Right cardiac atrium (tissue), 5 donors: ENCODE measurements at regions of chr5 and their contacts with region 1.

Region 1: GRCh38 chr5:79020861-79021561 is 35.9 kb upstream of the ARSB start:
- DNase-seq: peak; percentile 52 to 69 (median 64)
- ATAC-seq: peak; percentile 81 to 87
- H3K4me3 ChIP-seq: peak overlapping the region; percentile 21
- H3K27ac ChIP-seq: no peak overlapping the region
- H3K4me1 ChIP-seq: no peaks in the 10 kb centered on the region
- H3K27me3 ChIP-seq: no peaks in the 10 kb centered on the region

Region 2: GRCh38 chr5:79133657-79134451 is 112.8 kb after region 1 on chr5:
- intact Hi-C with region 1: loop called (anchors 2 to 5 kb)
- DNase-seq: peak; percentile 58 to 85 (median 68)
- ATAC-seq: peak; percentile 72 to 84
- H3K4me3 ChIP-seq: peak overlapping the region; percentile 51
- H3K27ac ChIP-seq: no peak overlapping the region
- H3K4me1 ChIP-seq: no peaks in the 10 kb centered on the region
- H3K27me3 ChIP-seq: no peaks in the 10 kb centered on the region

Region 3: GRCh38 chr5:79229357-79230174 is 208.6 kb after region 1 on chr5:
- intact Hi-C with region 1: loop called in 1 of 4 experiments (anchors 10 kb)
- DNase-seq: no peak
- ATAC-seq: no peak
- H3K4me3 ChIP-seq: no peak overlapping the region
- H3K27ac ChIP-seq: no peak overlapping the region
- H3K4me1 ChIP-seq: no peaks in the 10 kb centered on the region
- H3K27me3 ChIP-seq: no peaks in the 10 kb centered on the region

Region 4: DNA sequence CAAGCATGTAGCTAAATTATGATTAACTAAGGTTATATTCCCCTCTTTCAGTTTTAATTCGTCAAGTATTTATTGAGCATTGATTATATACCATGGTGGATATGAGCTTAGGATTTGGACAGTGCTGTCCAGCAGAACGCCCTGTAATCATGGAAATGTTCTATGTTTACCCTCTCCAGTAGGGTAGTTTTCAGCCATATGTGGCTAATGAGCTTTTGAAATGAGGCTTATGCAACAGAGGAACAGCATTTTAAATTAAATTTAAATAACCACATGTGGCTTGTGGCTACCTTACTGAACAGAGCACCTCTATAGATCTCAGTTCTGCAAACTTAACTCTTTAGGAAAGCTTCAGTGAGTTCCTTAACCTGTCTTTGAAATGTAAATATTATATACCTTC is 274.0 kb after region 1 on chr5:
- intact Hi-C with region 1: no loop called
- DNase-seq: no peak
- ATAC-seq: no peak
- H3K4me3 ChIP-seq: no peak overlapping the region
- H3K27ac ChIP-seq: no peak overlapping the region
- H3K4me1 ChIP-seq: no peaks in the 10 kb centered on the region
- H3K27me3 ChIP-seq: no peaks in the 10 kb centered on the region

Region 5: DNA sequence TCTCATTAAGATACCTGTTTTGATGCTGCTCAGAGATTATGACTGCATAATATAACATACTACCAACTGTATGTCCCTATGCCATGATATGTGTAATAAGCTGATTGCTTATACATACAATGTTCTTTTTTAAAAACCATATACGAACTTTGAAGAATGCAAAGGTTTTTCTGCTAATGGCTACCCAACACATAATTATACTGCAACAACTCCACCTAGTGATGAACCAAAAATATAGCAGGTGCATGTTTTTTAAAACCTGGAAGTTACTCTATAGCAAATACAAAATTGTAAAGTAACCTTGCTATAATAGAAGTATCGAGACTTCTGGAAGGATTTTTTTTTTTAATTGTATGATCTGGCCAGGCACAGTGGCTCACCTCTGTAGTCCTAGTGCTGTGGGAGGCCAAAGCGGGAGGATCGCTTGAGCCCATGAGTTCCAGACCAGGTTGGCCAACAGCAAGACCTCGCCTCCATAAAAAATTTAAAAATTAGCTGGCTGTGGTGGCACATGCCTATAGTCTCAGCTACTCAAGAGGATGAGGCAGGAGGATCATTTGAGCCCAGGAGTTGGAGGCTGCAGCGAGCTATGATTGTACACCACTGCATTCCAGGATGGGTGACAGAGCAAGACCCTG is 443.8 kb after region 1 on chr5:
- intact Hi-C with region 1: loop called in 3 of 4 experiments (anchors 5 to 10 kb)
- DNase-seq: no peak
- ATAC-seq: no peak
- H3K4me3 ChIP-seq: no peak overlapping the region
- H3K27ac ChIP-seq: no peak overlapping the region
- H3K4me1 ChIP-seq: no peaks in the 10 kb centered on the region
- H3K27me3 ChIP-seq: no peaks in the 10 kb centered on the region